Naive thymus-derived CD8-positive, alpha-beta T cell (primary cell): ENCODE measurements at regions of chr9 and their contacts with region 1.

Region 1: GRCh38 chr9:96398582-96399324 is 15.2 kb upstream of the SLC35D2 start:
- DNase-seq: peak in 7 of 10 donors; percentile 12 to 62 (median 39)
- ATAC-seq: peak; percentile 93 to 95
- H3K4me3 Mint-ChIP-seq: peak overlapping the region; percentile 43 to 78 (median 66)
- H3K27ac Mint-ChIP-seq: peak overlapping the region; percentile 93 to 97 (median 96)
- H3K4me1 Mint-ChIP-seq: peaks cover 20 to 34% (median 28%) of the 10 kb centered on the region in 4 donors
- H3K27me3 Mint-ChIP-seq: no peaks in the 10 kb centered on the region

Region 2: GRCh38 chr9:96317335-96317980 is 81.3 kb before region 1 on chr9:
- POLR2A ChIA-PET with region 1: no interaction called
- DNase-seq: peak in 9 of 10 donors; percentile 3 to 75 (median 43)
- ATAC-seq: peak; percentile 47 to 49
- H3K4me3 Mint-ChIP-seq: no peak overlapping the region
- H3K27ac Mint-ChIP-seq: no peak overlapping the region
- H3K4me1 Mint-ChIP-seq: peaks cover 0 to 6% (median 2%) of the 10 kb centered on the region in 4 donors
- H3K27me3 Mint-ChIP-seq: peaks cover 0 to 2% (median 0%) of the 10 kb centered on the region in 5 donors

Region 3: GRCh38 chr9:96327694-96328352 is 70.9 kb before region 1 on chr9:
- POLR2A ChIA-PET with region 1: interaction called, 10 read pairs
- DNase-seq: peak in 8 of 10 donors; percentile 28 to 73 (median 56)
- ATAC-seq: peak; percentile 56 to 70
- H3K4me3 Mint-ChIP-seq: no peak overlapping the region
- H3K27ac Mint-ChIP-seq: no peak overlapping the region
- H3K4me1 Mint-ChIP-seq: peaks cover 0 to 3% (median 0%) of the 10 kb centered on the region in 4 donors
- H3K27me3 Mint-ChIP-seq: no peaks in the 10 kb centered on the region

Region 4: GRCh38 chr9:96383165-96383942 is 15.4 kb before region 1 on chr9 and contains the start of gene SLC35D2:
- POLR2A ChIA-PET with region 1: interaction called, 41 read pairs
- DNase-seq: peak in 6 of 10 donors; percentile 14 to 34 (median 20)
- ATAC-seq: peak; percentile 77 to 81
- H3K4me3 Mint-ChIP-seq: peak within 1 kb of the TSS; percentile 78 to 94 (median 88)
- H3K27ac Mint-ChIP-seq: peak within 1 kb of the TSS; percentile 53 to 92 (median 88)
- H3K4me1 Mint-ChIP-seq: peaks cover 17 to 41% (median 33%) of the 10 kb centered on the region in 4 donors
- H3K27me3 Mint-ChIP-seq: no peaks in the 10 kb centered on the region
- polyA plus RNA-seq, gene SLC35D2: 17.0 to 21.5 (median 20.0) TPM

Region 5: DNA sequence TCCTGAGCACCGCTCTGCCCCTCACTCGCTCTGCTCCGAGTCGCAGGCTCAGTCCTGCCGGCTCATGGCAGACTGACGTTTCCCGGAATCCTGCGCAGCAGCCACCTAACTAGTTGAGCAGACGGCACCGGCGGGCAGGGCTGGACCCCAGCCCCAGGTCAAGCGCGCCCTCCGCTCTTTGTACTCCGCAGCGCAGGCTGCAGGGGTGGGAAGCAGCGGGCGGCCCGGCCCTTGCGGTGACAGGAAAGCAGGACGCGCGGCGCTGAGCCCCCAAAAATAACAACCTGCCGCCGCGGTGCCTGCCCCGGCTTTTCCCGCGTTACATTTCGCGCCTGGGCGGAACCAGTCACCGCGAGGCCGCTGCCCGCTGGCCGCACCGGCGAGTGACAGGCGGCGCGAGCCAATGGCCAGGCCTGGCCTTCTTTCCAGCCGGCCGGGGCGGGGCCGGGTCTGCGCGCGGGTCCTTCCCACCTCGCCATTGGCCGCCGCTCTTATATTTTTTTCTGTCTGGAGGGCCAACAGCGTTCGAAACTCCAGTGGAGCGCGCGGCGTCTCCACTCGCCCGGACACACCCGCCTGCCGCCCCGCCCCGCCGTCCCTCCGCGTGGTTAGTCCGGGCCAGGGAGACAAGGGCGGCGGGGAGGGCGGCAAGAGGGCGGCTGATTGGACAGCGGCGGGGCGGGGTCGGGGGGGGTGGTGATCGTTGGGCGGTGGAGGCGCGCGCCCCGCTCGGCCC is 19.5 kb after region 1 on chr9 and contains the start of gene ZNF367:
- POLR2A ChIA-PET with region 1: interaction called, 55 read pairs
- DNase-seq: peak; percentile 80 to 95 (median 84)
- ATAC-seq: peak; percentile 67 to 71
- H3K4me3 Mint-ChIP-seq: peak within 1 kb of the TSS; percentile 86 to 95 (median 92)
- H3K27ac Mint-ChIP-seq: peak within 1 kb of the TSS; percentile 85 to 98 (median 96)
- H3K4me1 Mint-ChIP-seq: peaks cover 8 to 43% (median 37%) of the 10 kb centered on the region in 4 donors
- H3K27me3 Mint-ChIP-seq: peaks cover 0 to 2% (median 0%) of the 10 kb centered on the region in 5 donors
- polyA plus RNA-seq, gene ZNF367: 0.82 to 2.2 (median 0.97) TPM

Region 6: GRCh38 chr9:96449845-96450612 is 51.3 kb after region 1 on chr9 and contains the start of gene HABP4:
- POLR2A ChIA-PET with region 1: interaction called, 17 read pairs
- DNase-seq: peak; percentile 92 to 99 (median 95)
- ATAC-seq: peak; percentile 89 to 95
- H3K4me3 Mint-ChIP-seq: peak within 1 kb of the TSS; percentile 87 to 98 (median 95)
- H3K27ac Mint-ChIP-seq: peak within 1 kb of the TSS; percentile 74 to 97 (median 92)
- H3K4me1 Mint-ChIP-seq: peaks cover 9 to 29% (median 25%) of the 10 kb centered on the region in 4 donors
- H3K27me3 Mint-ChIP-seq: peaks cover 0 to 8% (median 3%) of the 10 kb centered on the region in 5 donors
- polyA plus RNA-seq, gene HABP4: 13.5 to 31.8 (median 14.3) TPM

Region 7: DNA sequence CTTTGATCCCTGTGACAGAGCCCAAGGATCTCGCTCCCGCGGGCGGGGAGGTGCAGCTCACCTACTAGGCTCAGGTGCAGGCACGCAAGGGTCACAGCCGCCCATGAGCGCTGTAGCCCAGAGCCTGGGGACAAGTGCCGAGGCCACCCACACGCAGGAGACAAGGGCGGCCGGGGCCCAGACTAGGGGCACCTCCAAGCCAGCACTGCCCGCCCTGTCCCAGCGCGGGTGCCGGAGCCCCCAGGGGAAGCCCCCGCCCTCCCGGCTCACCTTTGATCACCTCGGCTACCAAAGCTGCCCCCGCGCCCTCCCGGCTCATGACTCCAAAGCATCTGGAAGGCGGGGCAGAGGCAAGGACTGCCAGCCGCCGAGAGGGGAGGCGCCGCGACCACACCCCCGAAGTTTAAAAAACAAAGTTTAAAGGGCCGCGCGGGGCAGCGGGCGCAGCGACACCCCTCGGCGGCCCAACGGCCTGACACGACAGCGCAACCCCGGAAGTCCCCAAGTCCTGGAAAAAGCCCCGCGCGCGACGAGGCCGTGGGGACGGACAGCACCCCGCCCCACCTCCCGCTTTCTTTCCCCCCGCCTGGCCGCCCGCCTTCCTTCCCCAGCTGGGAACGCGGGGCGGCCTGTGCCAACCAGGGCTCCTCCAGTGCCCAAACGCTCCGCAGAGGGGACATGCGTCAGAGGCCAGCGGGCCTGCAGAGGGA is 167.9 kb after region 1 on chr9:
- POLR2A ChIA-PET with region 1: interaction called, 18 read pairs
- DNase-seq: peak; percentile 68 to 91 (median 79)
- ATAC-seq: peak; percentile 84 to 87
- H3K4me3 Mint-ChIP-seq: peak overlapping the region; percentile 82 to 92 (median 88)
- H3K27ac Mint-ChIP-seq: peak overlapping the region; percentile 79 to 95 (median 87)
- H3K4me1 Mint-ChIP-seq: peaks cover 6 to 31% (median 23%) of the 10 kb centered on the region in 4 donors
- H3K27me3 Mint-ChIP-seq: peaks cover under 1 to 14% (median 7%) of the 10 kb centered on the region in 5 donors